Activated T-helper 2 cell treated with anti-CD3 and anti-CD28 coated beads, Interferon-gamma antibody, Interleukin-2, Interleukin-4, amounts not matched to agents 10 μg/mL and 5 μg/mL and 100 μg/mL, durations not matched to agents 14 hours and 24 hours and 36 hours (primary cell): ENCODE measurements at regions of chr19 and their contacts with region 1.

Region 1: DNA sequence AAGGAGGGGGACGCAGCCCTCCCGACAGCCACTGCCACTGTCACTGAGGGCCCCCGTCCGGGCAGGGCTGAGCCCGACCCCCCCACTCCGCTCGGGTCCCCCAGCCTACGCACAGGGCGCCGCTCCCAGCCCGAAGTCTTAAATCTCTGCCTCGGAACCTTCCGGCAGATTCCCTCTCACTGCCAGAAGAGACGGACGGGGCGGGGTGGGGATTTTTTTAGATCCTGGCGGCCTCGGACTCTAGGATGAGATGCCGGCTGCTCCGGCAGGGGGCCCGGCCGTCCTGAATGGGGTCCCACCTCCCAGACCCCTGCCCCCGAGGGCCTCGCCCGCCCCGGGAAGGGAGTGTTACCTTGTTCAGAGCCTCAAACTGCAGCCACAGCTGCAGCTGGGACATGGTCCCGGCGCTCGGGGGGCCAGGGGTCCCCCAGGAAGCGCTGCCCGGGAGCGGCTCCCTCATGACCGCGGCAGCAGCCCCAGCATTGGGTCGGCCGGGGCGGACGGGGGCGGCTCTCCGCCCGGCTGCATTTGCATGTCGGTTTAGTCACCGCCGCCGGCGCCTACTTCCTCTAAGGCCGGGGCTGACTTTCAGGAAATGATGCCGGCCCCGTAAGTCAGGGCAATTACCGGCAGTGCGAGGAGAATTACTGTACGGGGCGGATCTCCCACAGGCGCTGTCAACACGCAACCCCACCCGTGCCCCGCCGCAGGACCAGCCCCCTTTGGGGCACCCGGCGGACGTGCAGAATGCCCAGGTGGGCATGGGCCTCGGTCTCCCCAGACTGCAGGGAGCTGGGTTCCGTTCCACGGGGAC is 28.2 kb downstream of the GPX4 start:
- DNase-seq: peak; percentile 84
- H3K4me3 Mint-ChIP-seq: peak overlapping the region; percentile 86
- H3K27ac Mint-ChIP-seq: peak overlapping the region; percentile 81
- H3K4me1 Mint-ChIP-seq: peaks cover 12% of the 10 kb centered on the region
- H3K27me3 Mint-ChIP-seq: no peaks in the 10 kb centered on the region

Region 2: DNA sequence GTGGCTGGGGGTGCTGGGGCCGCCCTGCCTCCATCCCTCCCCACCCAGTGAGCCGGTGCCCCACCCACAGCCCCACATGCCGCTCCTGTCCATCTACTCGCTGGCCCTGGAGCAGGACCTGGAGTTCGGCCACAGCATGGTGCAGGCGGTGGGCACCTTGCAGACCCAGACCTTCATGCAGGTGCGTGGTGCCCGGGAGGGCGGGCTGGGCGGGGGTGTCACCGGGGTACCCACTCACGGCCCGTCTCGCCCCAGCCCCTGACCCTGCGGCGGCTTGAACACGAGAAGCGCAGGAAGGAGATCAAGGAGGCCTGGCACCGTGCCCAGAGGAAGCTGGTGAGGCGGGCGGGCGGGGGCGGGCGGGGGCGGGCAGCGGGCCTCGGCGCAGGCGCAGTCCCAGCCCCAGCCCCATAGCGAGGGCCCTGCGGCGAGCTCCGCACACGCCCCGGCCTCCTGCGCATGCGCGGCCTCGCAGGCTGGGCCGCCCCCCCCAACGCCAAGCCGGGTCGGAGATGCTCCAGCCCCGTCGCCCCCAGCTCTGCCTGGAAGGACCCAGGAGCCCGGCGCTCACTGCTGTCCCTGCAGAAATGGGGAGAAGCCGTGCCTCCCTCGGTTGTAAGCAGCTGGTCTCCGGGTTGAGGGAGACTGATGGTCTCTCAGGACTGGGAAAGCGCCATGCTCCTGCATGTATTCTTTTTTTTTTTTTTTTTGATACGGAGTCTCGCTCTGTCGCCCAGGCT is 57.2 kb before region 1 on chr19:
- intact Hi-C with region 1: loop called (anchors 5 kb)
- DNase-seq: peak; percentile 76
- H3K4me3 Mint-ChIP-seq: peak overlapping the region; percentile 72
- H3K27ac Mint-ChIP-seq: peak overlapping the region; percentile 91
- H3K4me1 Mint-ChIP-seq: peaks cover 40% of the 10 kb centered on the region
- H3K27me3 Mint-ChIP-seq: no peaks in the 10 kb centered on the region

Region 3: GRCh38 chr19:1173845-1174809 is 42.2 kb after region 1 on chr19 and contains the start of gene SBNO2:
- intact Hi-C with region 1: loop called (anchors 5 kb)
- DNase-seq: peak; percentile 88
- H3K4me3 Mint-ChIP-seq: peak within 1 kb of the TSS; percentile 88
- H3K27ac Mint-ChIP-seq: peak within 1 kb of the TSS; percentile 93
- H3K4me1 Mint-ChIP-seq: peaks cover 17% of the 10 kb centered on the region
- H3K27me3 Mint-ChIP-seq: peaks cover 1% of the 10 kb centered on the region
- total RNA-seq, gene SBNO2: 82.8 and 87.0 TPM in 2 replicates

Region 4: GRCh38 chr19:1189419-1189818 is 57.5 kb after region 1 on chr19:
- intact Hi-C with region 1: loop called (anchors 5 kb)
- DNase-seq: peak; percentile 25
- H3K4me3 Mint-ChIP-seq: no peak overlapping the region
- H3K27ac Mint-ChIP-seq: peak overlapping the region; percentile 51
- H3K4me1 Mint-ChIP-seq: peaks cover 16% of the 10 kb centered on the region
- H3K27me3 Mint-ChIP-seq: no peaks in the 10 kb centered on the region